ENCODE measurements at regions of chr1 and their contacts with region 1.

Region 1: DNA sequence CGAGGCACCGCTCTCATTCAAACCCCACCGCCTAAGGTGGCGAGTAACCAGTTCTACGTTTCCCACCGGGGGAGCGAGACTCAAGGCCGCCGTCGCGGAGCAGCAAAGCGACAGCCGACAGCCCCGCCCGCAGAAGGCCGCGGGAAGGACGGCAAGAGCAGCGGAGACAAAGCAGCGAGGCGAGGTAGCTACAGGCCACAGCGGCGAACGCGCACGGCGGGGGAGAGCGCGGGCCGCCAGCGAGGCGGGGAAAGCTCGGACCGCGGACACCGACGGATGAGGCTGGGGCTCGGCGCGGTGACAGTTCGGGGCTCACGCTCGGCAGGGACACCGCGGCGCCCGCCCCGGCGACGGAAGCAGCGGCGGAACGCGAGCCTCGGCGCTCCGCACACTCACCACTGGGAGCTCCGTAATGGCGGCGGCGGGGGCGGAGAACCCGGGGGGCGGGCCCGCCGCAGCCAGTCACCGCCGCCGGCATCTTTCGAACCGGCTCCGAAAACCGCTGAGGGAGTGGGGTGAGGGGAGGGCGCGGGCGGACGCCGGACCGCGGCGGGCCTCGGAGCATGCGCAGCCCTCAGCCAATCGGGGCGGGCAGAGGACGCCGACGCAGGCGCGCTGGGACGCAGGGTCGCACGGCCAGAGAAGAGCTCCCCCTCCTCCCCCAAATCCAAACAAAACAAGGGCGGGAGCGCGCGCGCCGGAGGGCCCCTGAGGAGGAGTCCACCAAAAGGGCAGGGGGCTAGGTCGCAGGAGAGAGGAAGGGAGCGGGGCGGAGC is 666 bp downstream of the HP1BP3 start:
- DNase-seq: peak; percentile 94
- ATAC-seq: peak; percentile 87
- H3K4me3 Mint-ChIP-seq: peak overlapping the region; percentile 91
- H3K27ac Mint-ChIP-seq: peak overlapping the region; percentile 91
- H3K4me1 Mint-ChIP-seq: peaks cover 22% of the 10 kb centered on the region
- H3K27me3 Mint-ChIP-seq: no peaks in the 10 kb centered on the region
- CTCF ChIP-seq: no peak

Region 2: DNA sequence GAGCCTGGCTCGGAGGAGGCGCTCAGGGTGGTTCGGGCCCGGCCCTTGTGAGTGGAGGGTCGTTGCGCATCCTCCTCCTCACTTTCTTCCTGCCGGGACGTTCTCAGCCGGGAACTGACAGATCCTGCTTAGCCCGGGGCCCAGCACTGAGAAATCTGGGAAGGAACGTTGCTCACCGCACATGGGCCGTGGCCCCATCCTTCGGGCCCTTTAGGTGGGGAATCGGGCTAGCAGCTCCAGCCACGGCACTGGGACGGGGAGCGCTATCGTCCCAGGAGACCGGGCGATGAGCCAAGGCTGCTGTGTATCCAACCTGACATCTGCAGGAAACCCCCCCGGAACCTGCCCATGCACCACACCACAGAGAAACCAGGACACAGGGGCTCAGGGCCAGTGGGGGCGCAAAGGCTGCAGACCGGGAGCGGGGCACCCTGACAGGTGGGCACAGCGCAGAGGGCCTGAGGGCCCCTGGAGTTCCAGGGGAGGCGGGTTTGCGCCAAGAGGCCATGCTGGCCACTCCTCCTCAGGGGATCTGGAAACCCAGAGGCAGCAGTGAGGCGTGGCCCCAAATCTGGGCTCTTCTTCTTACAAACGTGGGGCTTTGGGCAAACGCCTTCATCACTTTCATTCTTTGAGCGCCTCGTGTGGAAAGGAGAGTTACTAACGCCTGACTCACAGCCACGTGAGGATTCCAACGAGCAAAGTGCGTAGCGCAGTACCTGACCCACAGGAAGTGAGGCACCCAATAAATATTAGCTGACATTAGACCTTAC is 53.7 kb before region 1 on chr1 and contains the start of gene SH2D5:
- CTCF ChIA-PET with region 1: no interaction called
- POLR2A ChIA-PET with region 1: interaction called, 10 read pairs
- intact Hi-C with region 1: no loop called
- DNase-seq: peak; percentile 90
- ATAC-seq: peak; percentile 81
- H3K4me3 Mint-ChIP-seq: peak within 1 kb of the TSS; percentile 79
- H3K27ac Mint-ChIP-seq: peak within 1 kb of the TSS; percentile 66
- H3K4me1 Mint-ChIP-seq: peaks cover 15% of the 10 kb centered on the region
- H3K27me3 Mint-ChIP-seq: peaks cover 26% of the 10 kb centered on the region
- CTCF ChIP-seq: peak; percentile 42
- total RNA-seq, gene SH2D5: 1.3 to 1.6 TPM

Region 3: DNA sequence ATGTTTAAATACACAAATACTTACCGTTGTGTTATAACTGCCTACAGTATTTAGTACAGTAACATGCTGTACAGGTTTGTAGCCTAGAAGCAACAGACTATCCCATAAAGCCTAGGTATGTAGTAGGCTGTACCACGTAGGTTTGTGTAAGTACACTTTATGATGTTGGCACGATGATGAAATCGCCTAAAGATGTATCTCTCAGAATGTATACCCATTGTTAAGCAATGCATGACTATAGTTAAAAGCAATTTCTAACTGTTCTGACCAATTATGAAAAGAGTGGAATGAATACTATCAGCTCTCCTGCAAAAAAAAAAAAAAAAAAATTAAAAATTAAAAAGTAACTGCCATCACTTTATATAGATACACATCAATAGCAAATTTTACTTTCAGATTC is 10.7 kb before region 1 on chr1:
- CTCF ChIA-PET with region 1: interaction called, 4 read pairs
- POLR2A ChIA-PET with region 1: interaction called, 12 read pairs
- intact Hi-C with region 1: no loop called
- DNase-seq: no peak
- ATAC-seq: peak; percentile 20
- H3K4me3 Mint-ChIP-seq: no peak overlapping the region
- H3K27ac Mint-ChIP-seq: no peak overlapping the region
- H3K4me1 Mint-ChIP-seq: peaks cover 17% of the 10 kb centered on the region
- H3K27me3 Mint-ChIP-seq: no peaks in the 10 kb centered on the region
- CTCF ChIP-seq: no peak

Region 4: GRCh38 chr1:20896871-20897223 is 110.4 kb after region 1 on chr1:
- CTCF ChIA-PET with region 1: no interaction called
- POLR2A ChIA-PET with region 1: no interaction called
- intact Hi-C with region 1: no loop called
- DNase-seq: no peak
- ATAC-seq: no peak
- H3K4me3 Mint-ChIP-seq: no peak overlapping the region
- H3K27ac Mint-ChIP-seq: no peak overlapping the region
- H3K4me1 Mint-ChIP-seq: no peaks in the 10 kb centered on the region
- H3K27me3 Mint-ChIP-seq: no peaks in the 10 kb centered on the region
- CTCF ChIP-seq: no peak

Measured in activated CD8-positive, alpha-beta T cell treated with anti-CD3 and anti-CD28 coated beads for 36 hours (primary cell).